ENCODE measurements at regions of chr22 and their contacts with region 1.

Region 1: GRCh38 chr22:38506118-38506962 is at the start of gene DDX17:
- DNase-seq: peak; percentile 91 to 95
- ATAC-seq: peak; percentile 85 to 89 (median 86)
- H3K4me3 ChIP-seq: peak within 1 kb of the TSS; percentile 87
- H3K27ac ChIP-seq: peak within 1 kb of the TSS; percentile 100
- H3K4me1 ChIP-seq: peaks cover 37% of the 10 kb centered on the region
- H3K27me3 ChIP-seq: no peaks in the 10 kb centered on the region
- CTCF ChIP-seq: no peak
- total RNA-seq, gene DDX17: 127 to 173 (median 150) TPM

Region 2: DNA sequence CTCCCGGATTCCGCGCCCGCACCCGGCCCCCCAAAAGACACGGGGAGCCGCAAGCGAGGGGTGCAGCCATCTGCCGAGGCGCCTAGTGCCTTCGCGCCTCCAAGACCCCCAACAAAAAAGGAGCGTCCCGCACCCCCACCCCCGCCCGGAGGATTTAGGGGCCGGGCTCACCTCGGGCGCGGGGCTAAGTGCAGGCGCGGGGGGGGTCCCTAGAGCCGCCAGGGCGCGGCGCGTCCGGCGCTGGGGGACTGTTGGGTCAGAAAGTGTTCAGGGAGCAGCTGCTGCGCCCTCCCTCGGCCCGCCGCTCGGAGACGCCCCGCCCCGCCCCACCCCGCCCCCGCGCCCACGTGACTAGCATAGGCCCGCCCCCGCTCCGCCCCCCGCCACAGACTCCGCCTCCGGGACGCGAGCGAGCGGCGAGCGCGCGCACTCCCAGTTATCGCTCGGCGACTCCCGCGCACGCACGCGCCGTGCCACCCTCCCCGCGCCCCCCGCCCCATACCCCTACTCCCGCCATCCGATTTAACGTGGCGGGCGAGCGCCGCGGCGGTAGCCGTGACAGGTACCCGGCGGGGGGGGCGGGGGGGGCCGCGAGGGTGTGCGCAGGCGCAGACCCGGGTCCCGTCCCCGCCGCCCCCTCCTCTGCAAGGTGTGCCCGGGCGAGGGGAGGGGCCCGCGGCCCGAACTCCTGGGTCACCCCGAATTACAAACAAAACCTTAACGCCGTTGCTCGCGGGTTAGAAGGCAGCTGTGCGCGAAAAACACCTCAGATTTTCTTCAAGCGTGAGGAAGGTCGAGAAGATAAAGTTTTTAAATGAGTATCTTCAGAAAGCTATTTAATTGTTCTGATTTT is 107.5 kb before region 1 on chr22:
- intact Hi-C with region 1: loop called in 1 of 2 experiments (anchors 10 kb)
- DNase-seq: peak; percentile 88 to 94
- ATAC-seq: peak; percentile 91 to 95 (median 92)
- H3K4me3 ChIP-seq: peak overlapping the region; percentile 84
- H3K27ac ChIP-seq: peak overlapping the region; percentile 91
- H3K4me1 ChIP-seq: peaks cover 14% of the 10 kb centered on the region
- H3K27me3 ChIP-seq: no peaks in the 10 kb centered on the region
- CTCF ChIP-seq: no peak

Region 3: GRCh38 chr22:38540701-38541100 is 34.4 kb after region 1 on chr22:
- intact Hi-C with region 1: no loop called
- DNase-seq: no peak
- ATAC-seq: no peak
- H3K4me3 ChIP-seq: no peak overlapping the region
- H3K27ac ChIP-seq: no peak overlapping the region
- H3K4me1 ChIP-seq: no peaks in the 10 kb centered on the region
- H3K27me3 ChIP-seq: no peaks in the 10 kb centered on the region
- CTCF ChIP-seq: no peak

Region 4: GRCh38 chr22:38681784-38682335 is 175.5 kb after region 1 on chr22 and contains the start of gene TOMM22:
- intact Hi-C with region 1: loop called in 1 of 2 experiments (anchors 10 kb)
- DNase-seq: peak; percentile 91 to 95
- ATAC-seq: peak; percentile 98 to 100 (median 98)
- H3K4me3 ChIP-seq: peak within 1 kb of the TSS; percentile 99
- H3K27ac ChIP-seq: peak within 1 kb of the TSS; percentile 94
- H3K4me1 ChIP-seq: peaks cover 8% of the 10 kb centered on the region
- H3K27me3 ChIP-seq: no peaks in the 10 kb centered on the region
- CTCF ChIP-seq: peak; percentile 59
- total RNA-seq, gene TOMM22: 56.9 to 80.7 (median 64.5) TPM

Measured in psoas muscle (tissue), 8 donors.